ENCODE measurements at regions of chr1 and their contacts with region 1.

Region 1: GRCh38 chr1:225474986-225475820 is 47.4 kb upstream of the LBR start:
- DNase-seq: peak; percentile 61 to 86 (median 84)
- ATAC-seq: peak; percentile 89 to 90
- H3K4me3 ChIP-seq: no peak overlapping the region
- H3K27ac ChIP-seq: no peak overlapping the region
- H3K4me1 ChIP-seq: no peaks in the 10 kb centered on the region
- H3K27me3 ChIP-seq: no peaks in the 10 kb centered on the region

Region 2: DNA sequence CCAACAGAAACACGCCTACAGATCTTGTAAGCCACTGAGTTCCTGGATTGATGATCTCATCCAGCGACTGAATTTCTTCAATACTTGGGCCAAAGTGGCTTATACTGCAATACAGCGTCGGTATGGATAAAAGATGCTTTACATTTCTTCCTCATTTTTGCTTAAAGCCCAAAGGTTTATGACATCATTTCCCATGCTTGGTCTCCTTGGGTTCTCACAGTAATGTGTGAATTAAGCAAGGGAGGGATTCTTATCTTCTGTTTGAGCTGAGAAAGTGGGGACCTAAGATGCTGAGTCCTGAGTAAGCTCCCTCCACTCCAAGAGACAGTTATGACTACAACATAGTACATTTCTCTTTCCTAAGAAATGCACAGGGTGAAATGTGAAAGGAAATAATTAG is 86.8 kb before region 1 on chr1:
- intact Hi-C with region 1: no loop called
- DNase-seq: no peak
- ATAC-seq: no peak
- H3K4me3 ChIP-seq: no peak overlapping the region
- H3K27ac ChIP-seq: no peak overlapping the region
- H3K4me1 ChIP-seq: no peaks in the 10 kb centered on the region
- H3K27me3 ChIP-seq: no peaks in the 10 kb centered on the region

Region 3: DNA sequence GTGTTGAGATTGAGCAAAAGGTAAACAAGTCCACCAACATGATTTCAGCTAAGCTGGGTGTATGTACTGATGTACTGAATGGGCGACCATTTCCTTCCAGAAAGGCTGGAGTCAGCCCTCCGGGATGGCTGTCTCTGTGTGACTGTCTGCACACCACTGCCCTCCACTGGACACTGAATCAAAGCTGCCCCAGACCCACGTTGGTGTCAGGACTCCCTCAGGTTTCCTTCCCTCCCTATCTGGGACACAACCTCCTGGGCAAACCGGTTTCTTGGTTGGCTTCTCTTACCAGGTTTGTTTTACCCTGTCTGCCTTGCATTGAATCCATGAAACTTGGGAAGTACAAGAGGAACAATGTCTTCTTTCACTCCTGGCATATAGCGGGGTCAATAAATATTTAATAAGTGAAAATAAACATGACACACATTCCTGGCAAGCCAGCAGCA is 297.1 kb after region 1 on chr1:
- intact Hi-C with region 1: loop called (anchors 5 kb)
- DNase-seq: peak; percentile 82 to 92 (median 90)
- ATAC-seq: peak; percentile 82 to 86
- H3K4me3 ChIP-seq: no peak overlapping the region
- H3K27ac ChIP-seq: no peak overlapping the region
- H3K4me1 ChIP-seq: peaks cover 8% of the 10 kb centered on the region
- H3K27me3 ChIP-seq: no peaks in the 10 kb centered on the region

Region 4: GRCh38 chr1:225777583-225778336 is 302.6 kb after region 1 on chr1 and contains the start of gene SRP9:
- intact Hi-C with region 1: loop called (anchors 5 kb)
- DNase-seq: peak; percentile 99 to 100 (median 100)
- ATAC-seq: peak; percentile 100
- H3K4me3 ChIP-seq: peak within 1 kb of the TSS; percentile 81
- H3K27ac ChIP-seq: peak within 1 kb of the TSS; percentile 97
- H3K4me1 ChIP-seq: peaks cover 1% of the 10 kb centered on the region
- H3K27me3 ChIP-seq: no peaks in the 10 kb centered on the region
- total RNA-seq, gene SRP9: 193 to 245 (median 219) TPM

Region 5: DNA sequence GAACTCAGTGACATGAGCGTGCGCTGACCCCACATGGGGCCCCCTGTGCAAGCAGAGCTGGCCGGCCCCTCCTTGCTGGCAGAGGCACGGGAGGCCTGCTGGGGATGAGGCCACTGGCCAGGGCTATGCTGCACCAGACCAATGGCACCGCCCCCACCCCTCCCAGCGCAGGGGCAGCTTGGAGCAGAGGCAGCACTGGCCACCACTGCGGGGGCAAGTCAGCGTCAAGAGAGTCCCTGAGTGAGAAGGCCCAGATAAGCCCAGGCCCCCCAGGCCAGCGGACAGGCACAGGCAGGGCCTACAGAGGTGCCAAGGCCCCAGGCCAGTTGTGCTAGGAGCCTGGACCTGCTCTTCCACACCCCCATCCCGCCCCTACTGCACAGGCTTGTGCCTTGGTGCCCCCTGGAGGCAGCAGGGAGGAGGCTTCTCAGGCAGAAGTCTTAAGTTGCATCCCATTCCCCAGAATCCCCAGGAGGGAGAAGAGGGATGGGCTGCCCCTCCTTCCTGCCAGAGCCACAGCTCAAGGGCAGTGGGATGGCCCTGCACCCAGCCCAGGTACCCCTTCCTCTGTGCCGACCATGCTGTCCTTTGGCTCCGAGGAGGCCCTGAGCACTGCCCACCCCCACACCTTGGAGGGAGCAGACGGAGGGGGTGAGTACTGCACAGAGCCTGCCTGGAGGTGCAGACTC is 370.5 kb after region 1 on chr1:
- intact Hi-C with region 1: loop called in 3 of 4 experiments (anchors 5 to 10 kb)
- DNase-seq: peak; percentile 88 to 94 (median 91)
- ATAC-seq: peak; percentile 78 to 82
- H3K4me3 ChIP-seq: no peak overlapping the region
- H3K27ac ChIP-seq: no peak overlapping the region
- H3K4me1 ChIP-seq: no peaks in the 10 kb centered on the region
- H3K27me3 ChIP-seq: no peaks in the 10 kb centered on the region

Region 6: DNA sequence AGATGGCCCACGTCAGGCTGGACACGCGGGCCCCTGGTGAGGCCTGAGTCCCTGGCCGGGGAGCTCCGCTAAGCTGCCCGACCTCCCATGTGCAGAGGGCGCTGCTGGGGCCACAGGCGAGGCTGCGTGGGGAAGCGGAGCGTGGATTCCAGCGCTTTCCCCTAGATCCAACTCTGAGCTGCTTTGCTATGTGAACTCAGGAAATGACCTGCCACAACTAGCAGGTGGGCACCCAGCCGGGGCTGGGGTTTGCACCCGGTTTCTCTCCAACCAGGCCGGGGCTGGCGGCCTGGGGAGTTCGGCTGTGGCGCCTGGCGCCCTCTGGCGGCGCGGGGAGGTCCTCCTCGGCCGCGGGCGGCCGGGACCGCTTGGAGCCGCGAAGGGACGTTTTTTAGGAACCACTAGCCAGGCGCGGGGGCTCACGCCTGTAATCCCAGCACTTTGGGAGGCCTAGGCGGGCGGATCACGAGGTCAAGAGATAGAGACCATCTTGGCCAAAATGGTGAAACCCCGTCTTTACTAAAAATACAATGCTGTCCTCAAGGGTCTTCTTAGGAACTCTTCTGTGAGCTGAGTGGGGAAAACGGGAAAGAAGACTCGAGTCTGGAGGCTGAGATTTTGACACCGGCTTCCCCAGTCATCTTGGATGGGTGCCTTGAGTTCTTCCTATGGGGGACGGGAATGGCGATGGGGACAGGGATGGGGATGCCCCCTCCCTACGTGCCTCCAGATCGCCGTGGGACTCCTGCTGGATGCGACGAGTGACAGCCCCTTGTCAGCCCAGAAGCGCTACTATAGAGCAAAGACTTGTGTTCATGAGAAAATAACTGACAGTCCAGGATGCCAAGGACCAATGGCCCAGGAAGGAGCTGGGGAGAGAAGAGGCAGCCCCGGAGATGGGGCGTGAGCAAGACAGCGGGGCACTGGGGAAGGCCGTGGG is 436.3 kb after region 1 on chr1:
- intact Hi-C with region 1: loop called (anchors 2 to 5 kb)
- DNase-seq: peak; percentile 73 to 90 (median 89)
- ATAC-seq: peak; percentile 91
- H3K4me3 ChIP-seq: no peak overlapping the region
- H3K27ac ChIP-seq: no peak overlapping the region
- H3K4me1 ChIP-seq: no peaks in the 10 kb centered on the region
- H3K27me3 ChIP-seq: no peaks in the 10 kb centered on the region

Region 7: DNA sequence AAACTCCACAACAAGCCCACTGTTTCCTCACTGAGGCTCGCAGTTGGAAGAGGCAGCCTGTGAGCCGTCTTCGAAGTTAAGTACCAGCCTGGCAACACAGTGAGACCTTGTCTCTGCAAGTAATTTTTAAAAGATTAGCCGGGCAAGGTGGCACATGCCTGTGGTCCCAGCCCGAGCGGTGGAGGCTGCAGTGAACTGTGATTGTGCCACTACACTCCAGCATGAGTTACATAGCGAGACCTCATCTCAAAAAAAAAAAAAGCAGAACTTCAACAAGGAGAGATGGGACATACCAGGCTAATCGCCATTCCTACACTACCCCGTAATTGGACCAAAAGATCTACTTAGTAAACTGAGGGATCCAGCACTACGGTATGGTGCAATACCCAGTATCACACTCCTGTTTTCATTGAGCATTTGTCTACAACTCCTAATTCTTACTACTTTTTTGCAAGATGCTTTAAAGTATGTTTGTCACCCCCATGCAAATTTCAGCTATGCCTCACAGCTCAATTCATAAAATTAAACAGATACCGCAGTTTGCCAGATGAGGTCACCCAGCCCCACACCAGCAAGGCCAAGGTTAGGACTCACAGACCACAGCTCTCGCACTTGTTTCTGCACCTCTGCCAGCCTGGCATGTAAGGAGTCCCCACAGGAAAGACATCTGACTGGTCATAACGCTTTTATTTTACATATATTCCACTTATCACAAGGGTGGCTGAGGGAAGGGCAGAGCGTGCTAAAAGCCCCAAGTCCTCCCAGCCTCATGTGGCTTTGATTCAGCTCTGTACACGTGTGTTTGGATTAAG is 502.9 kb after region 1 on chr1:
- intact Hi-C with region 1: loop called (anchors 2 to 10 kb)
- DNase-seq: no peak
- ATAC-seq: no peak
- H3K4me3 ChIP-seq: no peak overlapping the region
- H3K27ac ChIP-seq: no peak overlapping the region
- H3K4me1 ChIP-seq: no peaks in the 10 kb centered on the region
- H3K27me3 ChIP-seq: no peaks in the 10 kb centered on the region

Region 8: GRCh38 chr1:225987491-225988316 is 512.5 kb after region 1 on chr1:
- intact Hi-C with region 1: loop called in 1 of 4 experiments (anchors 5 kb)
- DNase-seq: no peak
- ATAC-seq: no peak
- H3K4me3 ChIP-seq: no peak overlapping the region
- H3K27ac ChIP-seq: no peak overlapping the region
- H3K4me1 ChIP-seq: no peaks in the 10 kb centered on the region
- H3K27me3 ChIP-seq: no peaks in the 10 kb centered on the region